B cell (primary cell): ENCODE measurements at regions of chr10 and their contacts with region 1.

Region 1: GRCh38 chr10:86521678-86522509 is at the start of gene WAPL:
- DNase-seq: peak; percentile 96
- ATAC-seq: peak; percentile 91
- H3K4me3 ChIP-seq: peak within 1 kb of the TSS; percentile 60 to 89 (median 80)
- H3K4me3 Mint-ChIP-seq: peak within 1 kb of the TSS; percentile 91
- H3K27ac ChIP-seq: peak within 1 kb of the TSS; percentile 42 to 85
- H3K27ac Mint-ChIP-seq: peak within 1 kb of the TSS; percentile 92
- H3K4me1 ChIP-seq: peaks cover 23 to 32% of the 10 kb centered on the region in 2 donors
- H3K4me1 Mint-ChIP-seq: peaks cover 35% of the 10 kb centered on the region
- H3K27me3 ChIP-seq: peaks cover 0 to 1% (median 0%) of the 10 kb centered on the region in 4 experiments
- H3K27me3 Mint-ChIP-seq: peaks cover 5% of the 10 kb centered on the region
- CTCF ChIP-seq: no peak
- total RNA-seq, gene WAPL: 42.8 and 42.9 TPM in 2 replicates

Region 2: DNA sequence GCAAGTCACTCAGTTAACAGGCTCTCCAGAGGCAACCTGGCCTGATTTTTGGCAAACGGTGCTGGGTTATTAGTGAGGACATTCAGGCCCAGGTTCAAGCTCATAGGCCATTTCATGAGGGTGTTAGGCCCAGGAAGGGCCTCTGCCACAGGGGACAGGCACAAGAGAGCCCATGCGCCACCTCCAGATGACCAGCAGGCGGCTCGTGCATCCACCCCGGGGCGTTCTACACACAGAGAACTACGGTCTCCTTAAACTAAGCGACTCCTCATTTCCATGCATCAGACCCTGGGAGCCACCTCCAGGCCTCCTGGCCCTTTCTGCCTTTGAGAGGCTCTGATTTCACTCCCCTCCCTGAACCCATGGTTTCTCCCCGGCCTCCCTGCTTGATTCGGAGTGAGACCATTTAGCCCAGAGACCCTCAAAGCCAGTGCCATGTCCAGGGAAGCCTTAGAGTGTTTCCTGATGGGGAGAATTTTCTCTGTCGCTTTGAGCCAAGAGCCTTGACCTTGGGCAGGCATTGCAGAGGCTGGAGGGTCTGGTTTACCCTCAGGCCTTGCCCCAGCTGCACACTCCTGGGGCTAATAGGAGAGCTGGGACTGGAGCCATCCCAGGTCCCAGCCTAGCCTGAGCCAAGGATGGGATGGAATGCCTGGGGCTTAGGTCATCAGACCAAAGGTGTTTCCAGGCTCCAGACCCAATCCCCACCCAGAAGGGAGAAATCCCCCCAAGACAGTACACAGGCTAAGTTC is 343.3 kb before region 1 on chr10:
- CTCF ChIA-PET with region 1: no interaction called
- POLR2A ChIA-PET with region 1: no interaction called
- intact Hi-C with region 1: no loop called
- DNase-seq: no peak
- ATAC-seq: no peak
- H3K4me3 ChIP-seq: no peak overlapping the region
- H3K4me3 Mint-ChIP-seq: no peak overlapping the region
- H3K27ac ChIP-seq: no peak overlapping the region
- H3K27ac Mint-ChIP-seq: no peak overlapping the region
- H3K4me1 ChIP-seq: no peaks in the 10 kb centered on the region
- H3K4me1 Mint-ChIP-seq: no peaks in the 10 kb centered on the region
- H3K27me3 ChIP-seq: no peaks in the 10 kb centered on the region
- H3K27me3 Mint-ChIP-seq: no peaks in the 10 kb centered on the region
- CTCF ChIP-seq: no peak

Region 3: DNA sequence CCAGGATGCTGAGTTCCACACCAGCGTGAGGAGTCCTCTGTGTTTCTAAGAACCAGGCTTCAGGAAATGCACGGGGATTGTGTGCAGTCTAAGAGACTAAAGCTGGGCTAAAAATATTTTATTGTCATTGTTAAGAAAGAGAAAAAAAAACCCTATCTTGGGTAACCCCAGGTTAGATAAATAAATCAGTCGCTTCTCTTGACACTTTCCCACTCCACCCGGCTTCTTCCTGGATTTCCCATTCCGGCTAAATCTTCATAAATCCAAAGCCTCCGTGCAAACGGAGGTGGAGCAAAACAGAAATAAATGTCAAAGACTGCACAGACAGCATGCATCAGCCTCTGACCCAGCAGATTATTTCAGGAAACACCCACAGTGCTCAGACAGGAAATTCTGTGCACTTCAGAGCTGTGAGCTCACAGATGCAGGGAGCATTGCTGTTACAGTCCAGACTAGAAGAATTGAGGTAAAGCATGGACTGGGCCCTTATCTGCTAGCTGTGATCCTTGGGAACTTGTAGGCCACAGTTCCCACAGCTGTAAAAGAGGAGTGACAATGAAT is 110.5 kb before region 1 on chr10:
- CTCF ChIA-PET with region 1: interaction called, 7 read pairs
- POLR2A ChIA-PET with region 1: interaction called, 8 read pairs
- intact Hi-C with region 1: loop called (anchors 1 kb)
- DNase-seq: peak; percentile 40
- ATAC-seq: no peak
- H3K4me3 ChIP-seq: peak overlapping the region in 2 of 5 experiments; percentile 10 to 35
- H3K4me3 Mint-ChIP-seq: peak overlapping the region; percentile 46
- H3K27ac ChIP-seq: no peak overlapping the region
- H3K27ac Mint-ChIP-seq: peak overlapping the region; percentile 71
- H3K4me1 ChIP-seq: peaks cover 38 to 45% of the 10 kb centered on the region in 2 donors
- H3K4me1 Mint-ChIP-seq: peaks cover 45% of the 10 kb centered on the region
- H3K27me3 ChIP-seq: no peaks in the 10 kb centered on the region
- H3K27me3 Mint-ChIP-seq: peaks cover 4% of the 10 kb centered on the region
- CTCF ChIP-seq: no peak

Region 4: DNA sequence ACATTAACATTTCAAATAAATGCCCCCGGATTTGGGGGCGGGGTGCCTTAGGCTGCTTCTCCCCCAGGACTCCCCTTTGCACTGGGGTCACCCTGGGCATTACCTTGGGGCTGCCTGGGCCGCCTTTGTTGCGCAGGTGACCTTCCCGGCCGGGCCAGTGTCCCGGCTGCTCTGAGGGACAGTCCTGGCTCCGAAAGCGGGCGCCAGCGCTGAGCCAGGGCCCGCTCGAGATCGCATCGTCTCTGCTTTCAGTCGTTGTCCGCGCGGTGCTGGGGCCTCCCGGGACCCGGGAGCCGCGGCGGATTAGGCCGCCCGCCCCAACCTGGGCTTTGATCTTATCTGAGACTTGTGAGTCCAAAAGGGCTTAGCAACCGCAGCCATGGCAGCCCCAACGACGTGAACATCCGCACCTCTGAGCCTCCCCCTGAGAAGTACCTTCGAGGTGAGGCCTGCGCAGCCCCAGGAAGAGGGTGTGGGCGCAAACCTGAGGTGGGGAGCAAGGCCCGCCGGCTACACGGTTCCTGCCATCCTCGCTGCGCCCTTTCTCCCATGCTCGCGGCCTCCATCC is 14.5 kb after region 1 on chr10:
- CTCF ChIA-PET with region 1: interaction called, 4 read pairs
- POLR2A ChIA-PET with region 1: no interaction called
- intact Hi-C with region 1: loop called (anchors 1 kb)
- DNase-seq: peak; percentile 58
- ATAC-seq: peak; percentile 37
- H3K4me3 ChIP-seq: peak overlapping the region in 4 of 5 experiments; percentile 30 to 60 (median 56)
- H3K4me3 Mint-ChIP-seq: peak overlapping the region; percentile 85
- H3K27ac ChIP-seq: no peak overlapping the region
- H3K27ac Mint-ChIP-seq: peak overlapping the region; percentile 74
- H3K4me1 ChIP-seq: peaks cover 15 to 21% of the 10 kb centered on the region in 2 donors
- H3K4me1 Mint-ChIP-seq: peaks cover 14% of the 10 kb centered on the region
- H3K27me3 ChIP-seq: peaks cover 0 to 27% (median 6%) of the 10 kb centered on the region in 4 experiments
- H3K27me3 Mint-ChIP-seq: peaks cover 9% of the 10 kb centered on the region
- CTCF ChIP-seq: no peak

Region 5: DNA sequence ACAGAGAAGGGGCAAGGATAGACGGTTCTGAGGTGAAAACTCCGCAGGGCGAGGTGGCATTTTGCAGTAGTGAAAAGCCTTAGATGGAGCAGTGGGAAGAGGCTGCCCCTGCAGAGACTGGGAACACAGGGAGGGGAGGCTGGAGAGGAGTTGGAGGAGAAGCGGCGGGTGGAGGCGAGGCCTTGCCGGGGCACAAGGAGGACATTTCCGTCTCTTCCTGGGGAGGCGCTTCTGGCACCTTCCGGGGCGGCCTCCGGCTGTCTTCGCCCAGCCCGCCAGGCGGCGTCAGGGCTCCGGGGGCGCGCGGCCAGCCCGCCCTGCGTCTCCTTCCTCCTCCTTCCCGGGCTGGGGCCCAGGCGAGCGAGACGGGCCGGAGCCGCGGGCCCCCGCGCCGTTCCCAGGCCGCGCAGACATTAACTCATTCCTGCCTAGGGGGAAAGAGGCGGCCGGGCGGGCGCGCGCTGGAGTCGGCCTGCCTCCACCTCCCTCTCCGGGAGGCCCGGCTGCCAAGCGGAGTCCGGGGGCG is 189.2 kb after region 1 on chr10:
- CTCF ChIA-PET with region 1: no interaction called
- POLR2A ChIA-PET with region 1: no interaction called
- intact Hi-C with region 1: loop called (anchors 2 kb)
- DNase-seq: peak; percentile 89
- ATAC-seq: peak; percentile 86
- H3K4me3 ChIP-seq: peak overlapping the region; percentile 2 to 83 (median 69)
- H3K4me3 Mint-ChIP-seq: peak overlapping the region; percentile 91
- H3K27ac ChIP-seq: peak overlapping the region; percentile 73 to 88
- H3K27ac Mint-ChIP-seq: peak overlapping the region; percentile 96
- H3K4me1 ChIP-seq: peaks cover 9 to 14% of the 10 kb centered on the region in 2 donors
- H3K4me1 Mint-ChIP-seq: peaks cover 11% of the 10 kb centered on the region
- H3K27me3 ChIP-seq: peaks cover 0 to 2% (median 0%) of the 10 kb centered on the region in 4 experiments
- H3K27me3 Mint-ChIP-seq: no peaks in the 10 kb centered on the region
- CTCF ChIP-seq: peak; percentile 82

Region 6: GRCh38 chr10:87094373-87095235 is 572.7 kb after region 1 on chr10 and contains the starts of genes GLUD1 and SHLD2:
- CTCF ChIA-PET with region 1: no interaction called
- POLR2A ChIA-PET with region 1: no interaction called
- intact Hi-C with region 1: loop called (anchors 2 kb)
- DNase-seq: peak; percentile 92
- ATAC-seq: peak; percentile 73
- H3K4me3 ChIP-seq: peak within 1 kb of the TSS; percentile 59 to 79 (median 78)
- H3K4me3 Mint-ChIP-seq: peak within 1 kb of the TSS; percentile 96
- H3K27ac ChIP-seq: peak within 1 kb of the TSS; percentile 86 to 93
- H3K27ac Mint-ChIP-seq: peak within 1 kb of the TSS; percentile 95
- H3K4me1 ChIP-seq: peaks cover 26 to 32% of the 10 kb centered on the region in 2 donors
- H3K4me1 Mint-ChIP-seq: peaks cover 51% of the 10 kb centered on the region
- H3K27me3 ChIP-seq: no peaks in the 10 kb centered on the region
- H3K27me3 Mint-ChIP-seq: no peaks in the 10 kb centered on the region
- CTCF ChIP-seq: no peak
- total RNA-seq, gene GLUD1: 71.5 and 81.0 TPM in 2 replicates
- total RNA-seq, gene SHLD2: 22.0 and 22.3 TPM in 2 replicates

Region 7: GRCh38 chr10:87534173-87534858 is 1012.4 kb after region 1 on chr10:
- CTCF ChIA-PET with region 1: no interaction called
- POLR2A ChIA-PET with region 1: no interaction called
- intact Hi-C with region 1: no loop called
- DNase-seq: no peak
- ATAC-seq: no peak
- H3K4me3 ChIP-seq: no peak overlapping the region
- H3K4me3 Mint-ChIP-seq: no peak overlapping the region
- H3K27ac ChIP-seq: no peak overlapping the region
- H3K27ac Mint-ChIP-seq: no peak overlapping the region
- H3K4me1 ChIP-seq: no peaks in the 10 kb centered on the region
- H3K4me1 Mint-ChIP-seq: no peaks in the 10 kb centered on the region
- H3K27me3 ChIP-seq: no peaks in the 10 kb centered on the region
- H3K27me3 Mint-ChIP-seq: no peaks in the 10 kb centered on the region
- CTCF ChIP-seq: no peak